Activated CD8-positive, alpha-beta T cell treated with anti-CD3 and anti-CD28 coated beads for 36 hours (primary cell): ENCODE measurements at regions of chr19 and their contacts with region 1.

Region 1: DNA sequence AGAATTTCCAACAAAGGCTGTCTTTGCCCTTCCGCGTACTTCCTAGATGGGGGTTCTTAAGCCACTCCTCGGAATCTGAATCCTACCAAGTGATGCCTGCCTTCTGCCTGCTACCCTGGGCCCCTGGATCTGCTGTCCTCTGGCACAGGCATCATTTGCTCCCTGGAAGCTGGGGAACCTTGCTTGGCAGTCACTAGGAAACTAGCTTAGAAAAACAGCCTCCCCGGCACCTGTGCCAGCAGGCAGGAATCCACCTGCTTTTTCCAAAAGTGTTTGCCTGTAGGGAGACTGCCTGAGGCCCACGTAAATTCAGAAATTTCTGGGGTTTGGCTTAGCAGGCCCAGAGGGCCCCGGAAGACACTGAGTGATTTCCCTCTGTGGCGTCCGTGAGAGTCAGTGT is 442.4 kb downstream of the TSHZ3 start:
- DNase-seq: no peak
- ATAC-seq: no peak
- H3K4me3 Mint-ChIP-seq: no peak overlapping the region
- H3K27ac Mint-ChIP-seq: no peak overlapping the region
- H3K4me1 Mint-ChIP-seq: no peaks in the 10 kb centered on the region
- H3K27me3 Mint-ChIP-seq: peaks cover 1% of the 10 kb centered on the region
- CTCF ChIP-seq: no peak

Region 2: DNA sequence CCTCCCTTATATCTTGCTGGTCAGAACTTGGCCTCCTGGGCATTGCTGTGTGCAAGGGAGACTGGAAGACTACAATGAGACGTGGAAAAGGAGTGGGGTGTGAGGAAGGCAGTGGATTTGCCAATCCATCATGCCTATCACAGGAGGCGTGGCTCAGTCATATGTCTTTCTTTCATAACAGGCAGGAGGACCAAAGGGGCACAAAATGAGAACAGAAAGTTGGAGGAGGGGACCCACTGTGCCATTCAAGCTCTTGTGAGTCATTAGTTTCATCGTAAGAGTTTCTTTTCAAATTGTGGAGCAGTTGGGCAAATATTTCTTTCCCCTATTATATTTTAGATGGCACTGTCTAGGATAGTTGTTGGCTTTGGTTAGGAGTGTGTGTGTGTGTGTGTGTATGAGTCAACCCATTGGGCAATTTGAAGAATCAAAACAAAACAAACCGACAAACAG is 29.2 kb before region 1 on chr19:
- CTCF ChIA-PET with region 1: no interaction called
- POLR2A ChIA-PET with region 1: no interaction called
- intact Hi-C with region 1: no loop called
- DNase-seq: no peak
- ATAC-seq: no peak
- H3K4me3 Mint-ChIP-seq: no peak overlapping the region
- H3K27ac Mint-ChIP-seq: no peak overlapping the region
- H3K4me1 Mint-ChIP-seq: no peaks in the 10 kb centered on the region
- H3K27me3 Mint-ChIP-seq: no peaks in the 10 kb centered on the region
- CTCF ChIP-seq: no peak

Region 3: GRCh38 chr19:30920222-30920621 is 13.4 kb after region 1 on chr19:
- CTCF ChIA-PET with region 1: no interaction called
- POLR2A ChIA-PET with region 1: no interaction called
- intact Hi-C with region 1: no loop called
- DNase-seq: no peak
- ATAC-seq: no peak
- H3K4me3 Mint-ChIP-seq: no peak overlapping the region
- H3K27ac Mint-ChIP-seq: no peak overlapping the region
- H3K4me1 Mint-ChIP-seq: no peaks in the 10 kb centered on the region
- H3K27me3 Mint-ChIP-seq: peaks cover 2% of the 10 kb centered on the region
- CTCF ChIP-seq: no peak

Region 4: GRCh38 chr19:30936276-30936675 is 29.4 kb after region 1 on chr19:
- CTCF ChIA-PET with region 1: no interaction called
- POLR2A ChIA-PET with region 1: no interaction called
- intact Hi-C with region 1: loop called (anchors 2 kb)
- DNase-seq: no peak
- ATAC-seq: no peak
- H3K4me3 Mint-ChIP-seq: no peak overlapping the region
- H3K27ac Mint-ChIP-seq: no peak overlapping the region
- H3K4me1 Mint-ChIP-seq: no peaks in the 10 kb centered on the region
- H3K27me3 Mint-ChIP-seq: peaks cover 2% of the 10 kb centered on the region
- CTCF ChIP-seq: no peak